Heart right ventricle (tissue), 16 donors: ENCODE measurements at regions of chr6 and their contacts with region 1.

Region 1: GRCh38 chr6:32127717-32128592 is at the start of gene ATF6B:
- DNase-seq: peak; percentile 96 to 100
- ATAC-seq: peak; percentile 94 to 96 (median 95)
- H3K4me3 ChIP-seq: peak within 1 kb of the TSS; percentile 60 to 97 (median 86)
- H3K27ac ChIP-seq: peak within 1 kb of the TSS; percentile 72 to 94 (median 85)
- H3K4me1 ChIP-seq: peaks cover 16 to 44% (median 34%) of the 10 kb centered on the region in 9 donors
- H3K27me3 ChIP-seq: no peaks in the 10 kb centered on the region
- CTCF ChIP-seq: no peak
- total RNA-seq, gene ATF6B: 20.1 to 44.4 (median 29.4) TPM

Region 2: DNA sequence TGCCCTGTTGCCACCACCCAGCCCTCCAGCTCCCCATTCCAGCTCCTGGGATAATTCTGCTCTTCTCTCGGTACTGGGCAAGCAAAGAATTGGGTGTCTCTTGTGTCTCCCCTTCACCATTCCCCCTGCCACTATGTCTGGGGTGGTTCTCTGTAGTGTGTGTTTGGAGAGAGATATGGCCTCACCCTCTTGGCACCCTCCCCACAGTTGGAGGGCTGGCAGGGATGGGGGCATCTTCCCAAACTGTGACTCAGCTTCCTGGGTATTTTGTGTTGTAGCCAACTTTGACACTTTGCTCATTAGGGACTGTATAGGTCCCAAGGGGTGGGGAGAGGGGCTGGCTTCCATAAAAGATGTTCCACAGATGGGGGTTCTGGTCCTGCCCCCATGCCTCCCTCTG is 20.5 kb before region 1 on chr6:
- intact Hi-C with region 1: loop called in 1 of 10 experiments (anchors 1 kb)
- DNase-seq: no peak
- ATAC-seq: peak in 3 of 8 donors; percentile 2 to 14 (median 10)
- H3K4me3 ChIP-seq: peak overlapping the region in 8 of 10 donors; percentile 57 to 82 (median 66)
- H3K27ac ChIP-seq: peak overlapping the region; percentile 80 to 96 (median 90)
- H3K4me1 ChIP-seq: peaks cover 24 to 79% (median 58%) of the 10 kb centered on the region in 9 donors
- H3K27me3 ChIP-seq: peaks cover 0 to 9% (median 0%) of the 10 kb centered on the region in 7 donors
- CTCF ChIP-seq: no peak

Region 3: DNA sequence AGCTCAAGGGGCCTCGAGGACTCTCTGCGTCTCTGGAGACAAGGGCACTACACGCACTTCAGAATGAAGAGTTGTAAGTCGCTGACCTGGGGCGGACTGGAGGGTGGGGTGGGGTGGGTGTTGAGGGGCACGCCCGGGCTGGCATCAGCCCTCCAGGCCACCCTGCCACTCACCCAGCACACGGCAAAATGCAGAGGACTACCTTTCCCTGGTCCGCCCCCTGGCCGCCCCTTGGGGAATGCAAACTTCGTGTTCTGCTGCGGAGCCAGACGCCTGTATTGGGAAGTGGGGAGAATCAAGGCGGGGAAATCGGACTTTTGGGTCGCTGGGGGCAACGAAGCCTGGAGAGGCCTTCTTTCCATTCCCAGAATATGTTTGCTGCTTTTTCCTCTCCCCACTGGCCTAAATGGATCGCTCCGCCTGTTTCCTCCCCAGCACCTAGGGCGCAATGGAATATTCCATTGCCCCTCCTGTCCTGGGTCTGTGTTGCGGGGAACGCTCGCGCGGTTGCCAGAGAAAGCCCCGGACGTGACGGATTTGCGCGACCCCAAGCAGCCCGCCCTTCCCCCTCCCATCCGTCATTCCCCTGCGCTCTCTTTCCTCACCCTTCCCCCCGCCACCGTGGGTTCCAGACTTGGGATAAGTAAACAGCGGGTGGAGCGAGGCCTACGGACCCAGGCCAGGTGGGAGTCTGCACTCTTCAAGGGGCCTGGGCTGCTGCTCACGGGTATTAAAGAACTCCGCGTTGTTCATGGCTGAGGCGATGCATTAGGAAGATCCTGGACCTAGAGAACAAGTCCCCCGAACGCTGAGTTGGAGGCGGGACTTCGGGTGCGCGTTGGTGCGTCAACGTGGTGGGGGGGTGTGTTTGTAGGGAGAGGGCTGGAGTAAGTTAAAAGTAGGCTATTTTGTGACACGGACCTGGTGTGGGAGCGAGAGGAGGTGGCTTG is 25.9 kb after region 1 on chr6 and contains the start of gene PPT2:
- intact Hi-C with region 1: loop called in 2 of 10 experiments (anchors 1 to 5 kb)
- DNase-seq: peak; percentile 90 to 95
- ATAC-seq: peak; percentile 90 to 96 (median 94)
- H3K4me3 ChIP-seq: peak within 1 kb of the TSS; percentile 58 to 91 (median 80)
- H3K27ac ChIP-seq: peak within 1 kb of the TSS; percentile 60 to 96 (median 91)
- H3K4me1 ChIP-seq: peaks cover 6 to 48% (median 30%) of the 10 kb centered on the region in 9 donors
- H3K27me3 ChIP-seq: peaks cover 0 to 57% (median 8%) of the 10 kb centered on the region in 7 donors
- CTCF ChIP-seq: peak in 5 of 9 donors; percentile 15 to 42 (median 30)
- total RNA-seq, gene PPT2: 18.0 to 31.8 (median 23.7) TPM

Region 4: GRCh38 chr6:32163559-32164258 is 35.8 kb after region 1 on chr6:
- intact Hi-C with region 1: loop called in 2 of 10 experiments (anchors 5 kb)
- DNase-seq: no peak
- ATAC-seq: peak; percentile 18 to 67 (median 59)
- H3K4me3 ChIP-seq: no peak overlapping the region
- H3K27ac ChIP-seq: peak overlapping the region; percentile 26 to 83 (median 50)
- H3K4me1 ChIP-seq: peaks cover 0 to 9% (median 0%) of the 10 kb centered on the region in 9 donors
- H3K27me3 ChIP-seq: no peaks in the 10 kb centered on the region
- CTCF ChIP-seq: no peak

Region 5: GRCh38 chr6:32177788-32178546 is 50.0 kb after region 1 on chr6 and contains the start of gene RNF5:
- intact Hi-C with region 1: loop called in 4 of 10 experiments (anchors 2 to 10 kb)
- DNase-seq: peak; percentile 87 to 99
- ATAC-seq: peak; percentile 82 to 89 (median 86)
- H3K4me3 ChIP-seq: peak within 1 kb of the TSS; percentile 56 to 93 (median 86)
- H3K27ac ChIP-seq: peak within 1 kb of the TSS; percentile 93 to 98 (median 94)
- H3K4me1 ChIP-seq: peaks cover 8 to 84% (median 55%) of the 10 kb centered on the region in 9 donors
- H3K27me3 ChIP-seq: no peaks in the 10 kb centered on the region
- CTCF ChIP-seq: no peak
- total RNA-seq, gene RNF5: 75.5 to 122 (median 82.7) TPM

Region 6: DNA sequence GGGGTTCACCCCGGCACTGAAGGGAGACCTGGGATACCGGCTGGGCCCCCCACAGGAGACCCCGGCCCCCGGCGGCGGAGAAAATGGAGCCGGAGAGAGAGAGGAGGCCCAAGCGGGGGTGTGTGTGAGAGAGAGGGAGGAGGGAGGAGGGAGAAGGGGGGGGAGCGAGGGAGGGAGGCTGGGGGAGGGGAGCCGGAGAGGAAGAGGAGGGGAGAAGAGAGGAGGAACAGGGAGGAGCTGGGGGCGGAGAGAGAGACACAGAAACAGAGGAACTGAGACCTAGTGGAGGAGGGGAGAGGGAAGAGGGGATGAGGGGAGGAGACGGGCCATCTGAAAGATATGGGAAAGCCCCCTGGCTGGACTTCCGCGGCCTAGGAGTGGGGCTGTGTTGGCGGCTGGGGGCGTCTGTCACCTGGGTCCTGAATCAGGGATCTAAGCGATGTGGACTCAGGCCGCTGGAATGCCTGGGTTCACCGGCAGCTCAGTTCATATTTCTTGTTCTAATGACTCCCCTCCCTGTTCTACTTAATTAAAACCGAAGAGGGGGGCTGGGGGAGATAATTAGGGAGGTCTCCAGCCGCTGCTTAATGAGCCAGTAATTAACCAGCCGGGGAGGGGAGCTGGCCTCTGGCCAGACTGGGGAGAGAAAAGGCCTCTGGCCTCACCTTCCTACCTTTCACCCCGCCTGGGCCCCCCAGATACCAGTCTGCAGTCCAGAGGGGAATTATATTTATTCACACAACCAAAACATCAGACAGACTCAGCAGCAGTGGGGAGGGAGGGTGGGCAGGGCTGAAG is 62.3 kb after region 1 on chr6 and contains the start of gene PBX2:
- intact Hi-C with region 1: loop called in 3 of 10 experiments (anchors 1 to 5 kb)
- DNase-seq: peak; percentile 86 to 98
- ATAC-seq: peak; percentile 69 to 85 (median 78)
- H3K4me3 ChIP-seq: peak within 1 kb of the TSS; percentile 50 to 85 (median 80)
- H3K27ac ChIP-seq: peak within 1 kb of the TSS; percentile 71 to 99 (median 98)
- H3K4me1 ChIP-seq: peaks cover 13 to 86% (median 74%) of the 10 kb centered on the region in 9 donors
- H3K27me3 ChIP-seq: no peaks in the 10 kb centered on the region
- CTCF ChIP-seq: no peak
- total RNA-seq, gene PBX2: 32.8 to 50.9 (median 44.1) TPM

Region 7: GRCh38 chr6:32195652-32195901 is 67.6 kb after region 1 on chr6:
- intact Hi-C with region 1: loop called in 3 of 10 experiments (anchors 1 to 5 kb)
- DNase-seq: peak; percentile 100
- ATAC-seq: peak in 6 of 8 donors; percentile 85 to 95 (median 86)
- H3K4me3 ChIP-seq: peak overlapping the region in 7 of 10 donors; percentile 65 to 79 (median 75)
- H3K27ac ChIP-seq: peak overlapping the region; percentile 98 to 100 (median 99)
- H3K4me1 ChIP-seq: peaks cover 11 to 68% (median 52%) of the 10 kb centered on the region in 9 donors
- H3K27me3 ChIP-seq: no peaks in the 10 kb centered on the region
- CTCF ChIP-seq: peak; percentile 45 to 82 (median 64)

Region 8: GRCh38 chr6:33822575-33823395 is 1694.8 kb after region 1 on chr6:
- intact Hi-C with region 1: no loop called
- DNase-seq: no peak
- ATAC-seq: no peak
- H3K4me3 ChIP-seq: no peak overlapping the region
- H3K27ac ChIP-seq: no peak overlapping the region
- H3K4me1 ChIP-seq: peaks cover 0 to 9% (median 0%) of the 10 kb centered on the region in 9 donors
- H3K27me3 ChIP-seq: peaks cover 0 to 51% (median 16%) of the 10 kb centered on the region in 7 donors
- CTCF ChIP-seq: peak in 2 of 9 donors; percentile 13 to 19